GM10248 (cell line): ENCODE measurements at regions of chr3 and their contacts with region 1.

Region 1: GRCh38 chr3:100833483-100833882 is 124.2 kb downstream of the TFG start:
- DNase-seq: no peak
- CTCF ChIP-seq: no peak

Region 2: DNA sequence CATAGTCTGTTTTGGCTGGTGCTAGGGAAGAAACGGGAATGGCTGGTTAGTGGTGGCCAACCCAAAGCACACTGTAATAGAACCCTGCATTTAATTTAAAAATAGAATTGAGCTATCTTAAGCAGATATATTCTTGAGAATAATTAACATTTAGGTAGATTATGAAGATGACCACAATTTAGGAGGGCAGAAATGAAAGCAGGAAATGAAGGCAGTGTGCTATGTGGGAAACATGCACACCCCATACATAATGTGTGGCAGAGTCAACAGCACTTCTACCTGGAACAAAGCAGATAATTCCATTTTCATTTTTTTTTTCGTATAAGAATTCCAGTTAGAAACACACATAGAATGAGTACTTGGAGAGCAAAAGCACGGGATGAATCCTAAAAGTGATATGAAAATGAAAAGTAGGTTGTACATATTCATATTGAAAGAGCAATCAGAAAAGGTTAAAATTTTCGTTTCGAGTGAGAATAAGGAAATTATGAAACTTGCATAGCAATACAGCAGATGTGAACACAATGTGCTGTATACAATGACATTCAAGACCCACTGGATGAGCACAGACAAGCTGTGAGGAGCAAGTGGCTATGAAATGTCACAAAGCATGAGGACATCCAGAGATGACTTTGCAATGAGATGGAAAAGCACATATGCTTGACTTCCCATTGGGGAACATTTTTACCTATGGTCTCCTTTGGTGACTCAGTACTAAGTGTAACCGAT is 21.5 kb before region 1 on chr3:
- CTCF ChIA-PET with region 1: interaction called, 10 read pairs
- POLR2A ChIA-PET with region 1: no interaction called
- DNase-seq: no peak
- CTCF ChIP-seq: no peak

Region 3: DNA sequence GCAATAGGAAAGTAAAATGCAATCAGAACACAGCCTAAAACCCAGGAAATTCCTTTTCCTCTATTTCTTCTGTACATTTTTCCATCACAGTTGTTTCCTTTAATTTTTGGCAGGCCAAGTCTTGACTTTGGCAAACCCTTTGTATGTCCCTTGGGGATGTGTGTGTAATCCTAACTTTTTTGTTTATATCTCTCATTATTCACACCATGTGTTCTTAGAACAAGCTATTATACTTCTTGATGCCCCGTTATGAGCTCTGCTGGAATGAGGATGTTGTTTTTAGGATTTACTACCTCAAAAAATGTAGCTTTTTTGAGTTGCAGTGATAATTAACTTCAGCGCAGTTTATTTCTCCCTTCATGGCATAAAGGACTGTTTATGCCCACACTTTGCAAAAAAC is 36.3 kb after region 1 on chr3:
- CTCF ChIA-PET with region 1: no interaction called
- POLR2A ChIA-PET with region 1: no interaction called
- DNase-seq: no peak
- CTCF ChIP-seq: no peak

Region 4: DNA sequence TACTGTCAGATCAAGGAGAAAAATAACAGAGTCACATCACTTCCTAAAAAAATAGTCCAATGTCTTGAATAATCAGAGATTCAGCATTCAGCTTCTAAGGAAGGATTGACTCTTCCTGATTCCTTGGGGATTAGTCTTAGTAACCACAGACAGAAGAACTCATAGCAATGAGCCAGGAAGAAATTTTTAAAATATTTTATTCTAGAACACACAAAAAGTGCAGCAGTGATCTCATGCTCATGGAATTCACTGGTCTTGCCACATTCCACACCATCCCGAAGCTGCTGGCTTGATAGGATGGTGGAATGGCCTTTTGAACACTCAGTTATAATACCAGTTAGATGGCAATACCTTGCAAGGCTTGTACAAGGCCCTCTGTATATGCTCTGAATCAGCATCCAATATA is 202.7 kb after region 1 on chr3:
- CTCF ChIA-PET with region 1: no interaction called
- POLR2A ChIA-PET with region 1: no interaction called
- DNase-seq: no peak
- CTCF ChIP-seq: no peak